Heart right ventricle (tissue), 16 donors: ENCODE measurements at regions of chr6 and their contacts with region 1.

Region 1: GRCh38 chr6:87701676-87702588 is at the start of gene AKIRIN2:
- DNase-seq: peak; percentile 96 to 97
- ATAC-seq: peak; percentile 94 to 98 (median 96)
- H3K4me3 ChIP-seq: peak within 1 kb of the TSS; percentile 77 to 99 (median 94)
- H3K27ac ChIP-seq: peak within 1 kb of the TSS; percentile 90 to 99 (median 98)
- H3K4me1 ChIP-seq: peaks cover 0 to 45% (median 34%) of the 10 kb centered on the region in 9 donors
- H3K27me3 ChIP-seq: no peaks in the 10 kb centered on the region
- CTCF ChIP-seq: no peak
- total RNA-seq, gene AKIRIN2: 33.9 to 56.0 (median 43.8) TPM

Region 2: DNA sequence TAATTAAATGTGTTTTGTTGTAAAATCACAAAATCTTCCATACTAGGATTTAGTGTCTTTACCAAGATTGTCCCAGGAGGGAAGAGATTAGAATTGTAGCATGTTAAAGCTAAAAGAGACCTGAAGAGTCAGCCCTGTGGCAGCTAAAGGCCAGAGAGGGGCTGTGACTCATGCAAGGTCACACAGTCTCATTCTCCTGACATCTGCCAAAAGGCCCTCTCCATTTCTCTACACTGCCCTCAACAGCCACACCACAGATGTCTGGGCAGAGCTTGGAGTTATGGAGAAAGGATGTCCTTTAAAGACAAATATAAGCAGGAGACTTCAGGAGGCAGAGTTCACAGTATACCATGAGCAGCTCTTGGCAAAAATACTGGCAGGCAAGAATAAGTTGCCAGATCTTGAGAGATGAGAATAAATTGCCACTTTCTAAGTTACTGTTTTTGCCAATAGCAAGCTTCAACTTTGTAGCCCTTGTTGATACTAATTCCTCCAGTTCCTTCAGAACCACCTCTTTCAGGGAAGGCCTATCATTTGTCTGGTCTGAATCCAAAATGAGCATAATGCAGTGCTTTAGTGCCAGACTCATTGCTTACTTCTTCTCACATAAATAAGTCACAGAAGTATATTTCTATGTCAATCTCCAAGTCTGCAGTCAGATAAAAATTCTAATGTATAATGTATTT is 41.6 kb before region 1 on chr6:
- intact Hi-C with region 1: loop called in 1 of 10 experiments (anchors 5 kb)
- DNase-seq: no peak
- ATAC-seq: peak in 6 of 8 donors; percentile 13 to 88 (median 43)
- H3K4me3 ChIP-seq: no peak overlapping the region
- H3K27ac ChIP-seq: peak overlapping the region in 5 of 10 donors; percentile 3 to 49 (median 17)
- H3K4me1 ChIP-seq: peaks cover 0 to 33% (median 8%) of the 10 kb centered on the region in 9 donors
- H3K27me3 ChIP-seq: no peaks in the 10 kb centered on the region
- CTCF ChIP-seq: no peak

Region 3: DNA sequence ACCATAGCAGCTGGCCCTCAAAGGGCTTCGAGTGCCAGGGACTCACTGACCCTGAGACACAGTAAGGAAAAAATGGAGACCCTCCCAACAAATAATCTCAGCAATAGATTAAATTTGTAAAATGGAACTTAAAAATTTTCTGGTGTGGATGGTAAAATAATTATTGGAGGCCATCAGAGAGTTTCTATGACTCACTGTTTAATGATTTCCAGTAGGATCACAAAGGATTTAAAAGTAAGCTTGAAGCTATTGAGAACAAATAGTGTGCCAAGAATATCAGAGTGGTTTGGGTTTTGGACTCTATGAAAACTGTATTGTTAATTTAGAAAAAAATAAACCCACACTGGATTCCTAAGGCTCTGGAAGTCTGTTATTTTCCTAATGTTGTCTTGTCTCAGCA is 115.3 kb after region 1 on chr6:
- intact Hi-C with region 1: no loop called
- DNase-seq: no peak
- ATAC-seq: peak in 1 of 8 donors; percentile 42
- H3K4me3 ChIP-seq: no peak overlapping the region
- H3K27ac ChIP-seq: no peak overlapping the region
- H3K4me1 ChIP-seq: peaks cover 0 to 5% (median 0%) of the 10 kb centered on the region in 9 donors
- H3K27me3 ChIP-seq: peaks cover 0 to 4% (median 0%) of the 10 kb centered on the region in 7 donors
- CTCF ChIP-seq: no peak